HepG2 (cell line): ENCODE measurements at regions of chr1 and their contacts with region 1.

Region 1: GRCh38 chr1:241799416-241799815 is 48.6 kb upstream of the EXO1 start:
- DNase-seq: no peak
- ATAC-seq: no peak
- H3K4me3 ChIP-seq: no peak overlapping the region
- H3K27ac ChIP-seq: no peak overlapping the region
- H3K4me1 ChIP-seq: no peaks in the 10 kb centered on the region
- H3K27me3 ChIP-seq: no peaks in the 10 kb centered on the region
- CTCF ChIP-seq: no peak
- EP300 ChIP-seq: no peak
- POLR2A ChIP-seq: no peak
- RAD21 ChIP-seq: no peak

Region 2: DNA sequence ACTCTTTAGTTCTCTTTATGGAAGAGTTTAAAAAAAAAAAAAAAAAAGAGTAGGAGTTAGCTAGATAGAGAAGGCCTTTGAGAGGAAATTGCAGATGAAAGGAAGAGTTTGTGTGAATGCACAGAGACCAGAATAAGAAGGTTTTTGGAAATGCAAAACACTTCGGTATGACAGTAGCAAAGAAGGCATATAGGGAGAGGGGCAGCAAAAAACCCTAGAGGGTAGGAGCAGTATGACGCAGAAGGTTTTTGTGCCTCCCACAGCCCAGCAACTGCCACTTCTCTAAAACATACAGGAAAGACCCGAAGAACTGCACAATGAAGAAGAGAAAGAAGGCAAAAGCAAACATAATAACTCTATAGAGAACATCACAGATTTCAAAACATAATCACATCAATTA is 63.0 kb before region 1 on chr1:
- CTCF ChIA-PET with region 1: no interaction called
- POLR2A ChIA-PET with region 1: no interaction called
- in situ Hi-C with region 1: loop called (anchors 10 kb)
- intact Hi-C with region 1: no loop called
- DNase-seq: no peak
- ATAC-seq: no peak
- H3K4me3 ChIP-seq: no peak overlapping the region
- H3K27ac ChIP-seq: no peak overlapping the region
- H3K4me1 ChIP-seq: no peaks in the 10 kb centered on the region
- H3K27me3 ChIP-seq: no peaks in the 10 kb centered on the region
- CTCF ChIP-seq: no peak
- EP300 ChIP-seq: no peak
- POLR2A ChIP-seq: no peak
- RAD21 ChIP-seq: no peak